ENCODE measurements at regions of chr22 and their contacts with region 1.

Region 1: DNA sequence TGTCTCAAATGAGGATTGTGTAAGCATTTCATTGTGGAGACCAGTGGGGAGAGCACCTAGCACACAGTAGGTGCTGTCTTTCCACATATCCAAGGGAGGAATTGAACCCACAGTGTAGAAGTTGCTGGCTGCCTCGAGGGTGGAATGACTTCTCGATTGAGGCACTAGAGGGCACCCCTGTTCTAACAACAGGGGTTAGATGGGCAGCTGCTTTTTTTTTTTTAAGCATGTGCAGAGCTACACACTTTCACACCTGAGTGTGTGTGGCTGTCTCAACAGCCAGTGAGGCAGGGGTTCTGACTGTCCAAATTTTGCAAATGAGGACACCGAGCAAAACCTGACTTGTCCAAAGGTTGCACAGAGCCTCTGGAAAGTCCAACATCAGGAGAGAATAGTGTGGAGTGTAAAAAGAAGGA is 118.2 kb upstream of the CRYBB3 start:
- DNase-seq: peak; percentile 88
- H3K4me3 Mint-ChIP-seq: no peak overlapping the region
- H3K27ac Mint-ChIP-seq: peak overlapping the region; percentile 88
- H3K4me1 Mint-ChIP-seq: peaks cover 72% of the 10 kb centered on the region
- H3K27me3 Mint-ChIP-seq: no peaks in the 10 kb centered on the region

Region 2: DNA sequence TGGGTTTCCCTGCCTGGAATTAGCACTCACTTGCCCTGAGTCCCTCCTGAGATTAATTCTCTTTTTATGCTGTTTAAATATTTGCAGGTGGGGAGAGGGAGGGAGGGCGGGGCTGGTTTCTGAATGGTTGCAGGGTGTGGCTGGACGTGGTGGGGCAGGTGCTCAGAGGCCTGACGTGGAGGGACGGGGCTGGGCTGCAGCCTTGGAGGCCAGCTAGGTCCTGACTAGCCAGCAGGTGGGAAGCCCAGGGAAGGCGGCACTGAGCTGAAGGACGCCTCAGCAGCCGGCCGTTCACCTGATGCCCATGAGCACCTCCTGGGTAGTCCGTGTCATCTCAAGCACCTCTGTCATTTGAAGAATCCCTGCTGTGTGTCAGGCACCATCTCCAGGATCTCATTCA is 254.1 kb before region 1 on chr22:
- intact Hi-C with region 1: no loop called
- DNase-seq: no peak
- H3K4me3 Mint-ChIP-seq: no peak overlapping the region
- H3K27ac Mint-ChIP-seq: no peak overlapping the region
- H3K4me1 Mint-ChIP-seq: no peaks in the 10 kb centered on the region
- H3K27me3 Mint-ChIP-seq: peaks cover 3% of the 10 kb centered on the region

Region 3: GRCh38 chr22:25054943-25055511 is 26.4 kb before region 1 on chr22:
- intact Hi-C with region 1: loop called (anchors 1 kb)
- DNase-seq: peak; percentile 76
- H3K4me3 Mint-ChIP-seq: peak overlapping the region; percentile 38
- H3K27ac Mint-ChIP-seq: peak overlapping the region; percentile 85
- H3K4me1 Mint-ChIP-seq: peaks cover 27% of the 10 kb centered on the region
- H3K27me3 Mint-ChIP-seq: peaks cover 2% of the 10 kb centered on the region

Region 4: GRCh38 chr22:25060522-25061071 is 20.8 kb before region 1 on chr22:
- intact Hi-C with region 1: loop called (anchors 1 kb)
- DNase-seq: peak; percentile 78
- H3K4me3 Mint-ChIP-seq: peak overlapping the region; percentile 64
- H3K27ac Mint-ChIP-seq: peak overlapping the region; percentile 86
- H3K4me1 Mint-ChIP-seq: peaks cover 52% of the 10 kb centered on the region
- H3K27me3 Mint-ChIP-seq: no peaks in the 10 kb centered on the region

Region 5: GRCh38 chr22:25067851-25068421 is 13.5 kb before region 1 on chr22:
- intact Hi-C with region 1: loop called (anchors 1 kb)
- DNase-seq: peak; percentile 96
- H3K4me3 Mint-ChIP-seq: peak overlapping the region; percentile 95
- H3K27ac Mint-ChIP-seq: peak overlapping the region; percentile 97
- H3K4me1 Mint-ChIP-seq: peaks cover 73% of the 10 kb centered on the region
- H3K27me3 Mint-ChIP-seq: no peaks in the 10 kb centered on the region

Region 6: DNA sequence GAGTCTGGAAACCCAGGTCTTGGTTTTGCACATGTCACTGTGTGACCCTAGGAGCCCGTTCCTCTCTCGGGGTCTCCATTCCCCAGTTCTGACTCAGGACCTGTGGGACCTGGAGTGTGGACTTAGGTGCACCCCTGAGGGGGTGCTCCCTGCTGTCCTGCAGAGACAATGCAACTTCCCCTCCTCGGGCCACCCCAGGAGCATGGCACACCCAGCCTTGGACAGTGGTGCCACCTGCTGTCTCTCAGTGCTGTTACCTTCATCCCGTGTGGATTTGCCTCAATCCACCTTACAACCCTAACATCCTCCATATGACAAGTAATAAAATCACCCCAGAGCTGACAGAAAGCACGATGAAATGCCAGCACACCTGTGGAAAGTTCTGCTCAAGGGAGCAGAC is 90.7 kb after region 1 on chr22:
- intact Hi-C with region 1: loop called (anchors 1 kb)
- DNase-seq: peak; percentile 63
- H3K4me3 Mint-ChIP-seq: no peak overlapping the region
- H3K27ac Mint-ChIP-seq: no peak overlapping the region
- H3K4me1 Mint-ChIP-seq: no peaks in the 10 kb centered on the region
- H3K27me3 Mint-ChIP-seq: no peaks in the 10 kb centered on the region

Region 7: DNA sequence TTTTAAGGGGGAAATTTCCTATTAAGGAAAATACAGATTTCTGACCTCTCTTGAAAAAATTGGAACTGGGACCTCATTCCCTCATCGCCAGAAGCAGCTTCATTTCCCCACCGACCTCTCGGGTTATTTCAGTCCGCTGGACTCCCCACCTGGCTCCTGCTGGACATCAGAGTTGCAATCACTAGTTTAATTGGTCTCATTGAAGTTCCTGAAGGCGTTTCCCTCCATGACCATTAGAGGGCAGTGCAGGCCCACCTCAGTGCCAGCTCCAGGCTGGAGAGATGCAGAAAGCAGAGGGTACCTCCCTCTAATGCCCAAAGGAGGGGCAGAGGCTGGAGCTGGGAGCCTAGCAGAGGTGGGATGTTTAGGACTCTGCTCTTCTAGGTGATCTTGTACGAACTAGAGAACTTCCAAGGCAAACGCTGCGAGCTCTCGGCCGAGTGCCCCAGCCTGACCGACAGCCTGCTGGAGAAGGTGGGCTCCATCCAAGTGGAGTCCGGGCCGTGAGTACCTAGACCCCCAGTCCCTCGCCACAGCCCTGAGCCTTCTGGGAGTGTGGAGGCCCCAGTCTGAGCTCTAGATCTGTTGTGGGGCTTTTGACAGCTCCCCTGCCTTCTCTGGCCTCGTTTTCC is 121.0 kb after region 1 on chr22:
- intact Hi-C with region 1: loop called (anchors 1 kb)
- DNase-seq: peak; percentile 87
- H3K4me3 Mint-ChIP-seq: no peak overlapping the region
- H3K27ac Mint-ChIP-seq: no peak overlapping the region
- H3K4me1 Mint-ChIP-seq: peaks cover 2% of the 10 kb centered on the region
- H3K27me3 Mint-ChIP-seq: no peaks in the 10 kb centered on the region

Region 8: DNA sequence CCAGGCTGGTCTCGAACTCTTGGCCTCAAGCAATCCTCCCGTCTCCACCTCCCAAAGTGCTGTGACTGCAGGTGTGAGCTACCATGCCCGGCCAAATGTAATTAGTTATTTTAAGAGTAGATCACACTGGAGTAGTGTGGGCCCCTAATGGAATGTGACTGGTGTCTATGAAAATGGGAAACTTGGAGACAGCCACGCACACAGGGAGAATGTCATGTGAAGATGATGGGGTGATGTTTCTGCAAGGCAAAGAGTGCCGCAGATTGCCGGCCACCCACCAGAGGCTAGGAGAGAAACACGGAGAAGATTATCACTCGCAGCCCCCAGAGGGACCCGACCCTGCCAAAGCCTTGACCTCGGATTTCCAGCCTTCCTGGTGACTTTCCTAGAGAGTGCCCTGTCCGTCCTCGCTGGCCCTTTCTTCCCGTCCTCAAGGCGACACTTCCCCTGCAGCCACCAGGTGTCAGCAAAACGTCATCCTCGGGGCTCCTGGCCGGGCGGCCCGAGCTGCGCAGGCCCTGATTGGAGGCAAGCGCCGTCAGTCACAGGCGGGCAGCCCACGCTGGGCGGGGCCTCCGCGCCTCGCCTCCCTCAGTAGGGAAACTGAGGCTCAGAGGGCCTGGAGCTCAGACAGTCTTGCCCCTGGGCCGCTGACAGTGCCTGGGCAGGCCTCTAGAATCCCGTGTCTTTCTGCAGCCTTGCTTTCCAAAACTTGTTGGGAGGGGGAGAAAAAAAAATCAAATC is 154.3 kb after region 1 on chr22:
- intact Hi-C with region 1: no loop called
- DNase-seq: peak; percentile 93
- H3K4me3 Mint-ChIP-seq: no peak overlapping the region
- H3K27ac Mint-ChIP-seq: no peak overlapping the region
- H3K4me1 Mint-ChIP-seq: peaks cover 2% of the 10 kb centered on the region
- H3K27me3 Mint-ChIP-seq: peaks cover 25% of the 10 kb centered on the region

Measured in activated CD4-positive, alpha-beta T cell treated with anti-CD3 and anti-CD28 coated beads, Interleukin-2, amount 10 ng/mL, durations not matched to agents 24 days and 14 days (primary cell).